Naive thymus-derived CD4-positive, alpha-beta T cell (primary cell): ENCODE measurements at regions of chr3 and their contacts with region 1.

Region 1: GRCh38 chr3:47164007-47164881 is at the start of gene SETD2:
- DNase-seq: peak; percentile 67 to 86 (median 82)
- ATAC-seq: peak; percentile 92
- H3K4me3 ChIP-seq: peak within 1 kb of the TSS; percentile 77
- H3K4me3 Mint-ChIP-seq: peak within 1 kb of the TSS; percentile 90 to 99 (median 98)
- H3K27ac ChIP-seq: peak within 1 kb of the TSS; percentile 96
- H3K27ac Mint-ChIP-seq: peak within 1 kb of the TSS; percentile 94 to 99 (median 99)
- H3K4me1 ChIP-seq: peaks cover 30 to 36% of the 10 kb centered on the region in 2 donors
- H3K4me1 Mint-ChIP-seq: peaks cover 34 to 68% (median 56%) of the 10 kb centered on the region in 7 donors
- H3K27me3 ChIP-seq: no peaks in the 10 kb centered on the region
- H3K27me3 Mint-ChIP-seq: no peaks in the 10 kb centered on the region
- total RNA-seq, gene SETD2: 49.2 to 77.3 (median 71.1) TPM

Region 2: GRCh38 chr3:47117807-47118364 is 46.4 kb before region 1 on chr3:
- CTCF ChIA-PET with region 1: no interaction called
- POLR2A ChIA-PET with region 1: interaction called, 4 read pairs
- intact Hi-C with region 1: loop called in 1 of 2 experiments (anchors 1 kb)
- DNase-seq: peak in 3 of 9 donors; percentile 15 to 25 (median 25)
- ATAC-seq: peak; percentile 67
- H3K4me3 ChIP-seq: no peak overlapping the region
- H3K4me3 Mint-ChIP-seq: peak overlapping the region in 9 of 10 donors; percentile 2 to 60 (median 19)
- H3K27ac ChIP-seq: no peak overlapping the region
- H3K27ac Mint-ChIP-seq: peak overlapping the region; percentile 6 to 70 (median 28)
- H3K4me1 ChIP-seq: peaks cover 4 to 13% of the 10 kb centered on the region in 2 donors
- H3K4me1 Mint-ChIP-seq: peaks cover 30 to 61% (median 53%) of the 10 kb centered on the region in 7 donors
- H3K27me3 ChIP-seq: no peaks in the 10 kb centered on the region
- H3K27me3 Mint-ChIP-seq: no peaks in the 10 kb centered on the region

Region 3: DNA sequence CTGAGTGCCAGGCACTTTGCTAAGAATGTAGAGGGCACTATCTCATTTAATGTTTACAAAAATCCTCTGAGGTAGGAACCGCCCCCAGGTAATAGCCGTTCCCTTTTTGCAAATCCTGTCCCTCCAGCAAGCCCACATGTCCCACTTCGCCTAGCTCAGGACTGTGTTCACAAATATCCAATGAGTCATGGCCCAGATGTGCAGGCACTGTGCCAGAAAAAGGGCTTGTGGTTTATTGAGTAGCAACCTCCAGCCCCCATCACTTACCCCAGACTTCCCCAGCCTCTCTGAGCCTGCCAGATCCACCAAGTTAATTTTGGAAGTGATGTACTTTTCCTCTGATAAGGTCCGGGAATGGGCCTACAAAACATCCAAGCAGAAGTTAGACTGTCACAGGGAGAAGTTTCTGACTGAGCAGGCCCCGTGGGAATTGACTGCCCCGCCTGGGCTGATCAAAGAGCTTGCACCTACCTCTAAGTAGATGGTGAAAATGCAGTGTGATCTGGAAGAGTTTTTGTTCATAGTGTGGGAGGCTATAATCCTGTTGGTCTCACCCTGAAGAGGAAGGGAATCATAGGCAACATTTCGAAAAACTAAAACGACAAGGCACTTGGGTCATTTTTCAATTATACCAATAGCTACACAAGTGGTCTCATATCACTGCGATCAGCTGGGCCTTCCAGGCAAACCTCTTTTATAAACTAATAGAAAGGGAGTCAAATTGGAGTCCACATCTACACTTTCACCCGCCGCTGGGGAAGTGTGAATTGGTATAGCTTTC is 102.7 kb after region 1 on chr3:
- CTCF ChIA-PET with region 1: no interaction called
- POLR2A ChIA-PET with region 1: no interaction called
- intact Hi-C with region 1: no loop called
- DNase-seq: no peak
- ATAC-seq: peak; percentile 32
- H3K4me3 ChIP-seq: no peak overlapping the region
- H3K4me3 Mint-ChIP-seq: no peak overlapping the region
- H3K27ac ChIP-seq: no peak overlapping the region
- H3K27ac Mint-ChIP-seq: peak overlapping the region in 2 of 9 donors; percentile 19 to 37
- H3K4me1 ChIP-seq: no peaks in the 10 kb centered on the region
- H3K4me1 Mint-ChIP-seq: peaks cover 0 to 7% (median 3%) of the 10 kb centered on the region in 7 donors
- H3K27me3 ChIP-seq: no peaks in the 10 kb centered on the region
- H3K27me3 Mint-ChIP-seq: no peaks in the 10 kb centered on the region

Region 4: DNA sequence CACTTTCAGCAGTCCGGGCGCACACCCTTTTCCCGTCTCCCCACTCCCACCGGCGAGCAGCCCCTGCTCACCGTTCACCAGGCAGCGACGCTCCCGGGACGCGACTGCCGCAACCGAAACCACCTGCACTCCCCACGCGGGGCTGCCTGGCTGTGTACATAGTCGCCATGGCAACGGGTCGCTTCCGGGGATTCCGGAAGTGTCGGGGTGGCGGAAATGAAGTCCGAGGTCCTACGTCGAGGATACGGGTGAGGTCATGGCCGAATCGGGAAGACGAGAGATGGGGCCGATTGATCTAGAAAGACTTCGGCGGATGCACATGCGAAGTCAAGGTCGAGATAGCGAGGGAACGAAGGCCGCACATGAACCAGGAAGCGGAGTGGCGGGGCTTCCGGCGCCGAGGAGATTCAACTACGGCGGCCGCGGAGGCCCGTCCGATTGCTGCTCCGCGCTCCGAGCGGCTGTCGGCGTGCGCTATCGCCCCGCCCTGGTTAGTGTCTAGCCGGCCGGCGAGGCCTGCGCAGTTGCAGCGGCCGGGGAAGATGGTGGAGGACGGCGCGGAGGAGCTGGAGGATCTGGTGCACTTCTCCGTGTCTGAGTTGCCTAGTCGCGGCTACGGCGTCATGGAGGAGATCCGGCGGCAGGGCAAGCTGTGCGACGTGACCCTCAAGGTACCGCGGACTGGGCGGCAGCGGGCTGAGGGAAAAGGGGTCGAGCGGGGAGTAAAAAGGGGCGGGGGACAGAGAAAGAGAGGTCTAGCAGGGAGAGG is 118.4 kb after region 1 on chr3 and contains the starts of genes KIF9 and KLHL18:
- CTCF ChIA-PET with region 1: no interaction called
- POLR2A ChIA-PET with region 1: interaction called, 10 read pairs
- intact Hi-C with region 1: loop called (anchors 1 kb)
- DNase-seq: peak; percentile 86 to 98 (median 97)
- ATAC-seq: peak; percentile 91
- H3K4me3 ChIP-seq: peak within 1 kb of the TSS; percentile 76
- H3K4me3 Mint-ChIP-seq: peak within 1 kb of the TSS; percentile 89 to 100 (median 98)
- H3K27ac ChIP-seq: peak within 1 kb of the TSS; percentile 93
- H3K27ac Mint-ChIP-seq: peak within 1 kb of the TSS; percentile 98 to 100 (median 99)
- H3K4me1 ChIP-seq: peaks cover 14 to 23% of the 10 kb centered on the region in 2 donors
- H3K4me1 Mint-ChIP-seq: peaks cover 29 to 56% (median 43%) of the 10 kb centered on the region in 7 donors
- H3K27me3 ChIP-seq: no peaks in the 10 kb centered on the region
- H3K27me3 Mint-ChIP-seq: no peaks in the 10 kb centered on the region
- total RNA-seq, gene KIF9: 2.7 to 15.0 (median 4.1) TPM
- total RNA-seq, gene KLHL18: 21.7 to 47.5 (median 24.5) TPM

Region 5: DNA sequence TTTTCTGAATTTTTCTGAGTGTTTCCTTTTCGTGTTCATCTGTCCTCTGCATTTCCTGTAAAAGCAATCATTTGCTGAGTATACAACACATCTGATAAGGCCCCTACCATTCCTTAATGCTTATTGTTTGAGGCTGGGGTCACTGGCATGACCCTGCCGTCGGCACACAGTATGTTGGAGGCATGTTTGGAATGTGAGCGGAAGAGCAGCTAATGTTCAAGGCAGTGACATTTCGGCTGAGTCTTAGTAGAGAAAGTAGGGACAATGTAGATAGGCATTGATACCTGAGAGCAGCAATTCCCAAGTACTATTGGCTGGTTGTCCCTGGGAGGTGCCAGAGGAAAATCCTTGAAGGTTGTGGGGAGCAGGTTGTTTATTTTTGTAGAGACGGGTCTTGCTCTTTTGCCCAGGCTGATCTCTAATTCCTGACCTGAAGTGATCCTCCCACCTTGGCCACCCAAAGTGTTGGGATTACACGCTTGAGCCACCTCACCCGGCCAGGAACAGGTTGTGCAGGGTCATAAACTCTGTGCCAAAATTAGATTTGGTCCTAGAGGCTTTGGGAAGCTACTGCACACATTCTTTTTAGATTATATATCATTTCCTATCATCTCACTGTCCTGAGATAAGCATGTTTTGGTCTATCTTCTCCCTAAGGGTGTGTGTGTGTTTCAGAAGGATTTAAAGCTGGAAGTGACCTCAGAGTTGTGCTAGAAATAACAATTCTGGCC is 230.1 kb after region 1 on chr3:
- CTCF ChIA-PET with region 1: no interaction called
- POLR2A ChIA-PET with region 1: no interaction called
- intact Hi-C with region 1: no loop called
- DNase-seq: no peak
- ATAC-seq: no peak
- H3K4me3 ChIP-seq: no peak overlapping the region
- H3K4me3 Mint-ChIP-seq: peak overlapping the region in 1 of 10 donors; percentile 10
- H3K27ac ChIP-seq: no peak overlapping the region
- H3K27ac Mint-ChIP-seq: peak overlapping the region in 7 of 9 donors; percentile 17 to 82 (median 61)
- H3K4me1 ChIP-seq: no peaks in the 10 kb centered on the region
- H3K4me1 Mint-ChIP-seq: peaks cover 19 to 56% (median 26%) of the 10 kb centered on the region in 7 donors
- H3K27me3 ChIP-seq: no peaks in the 10 kb centered on the region
- H3K27me3 Mint-ChIP-seq: no peaks in the 10 kb centered on the region

Region 6: GRCh38 chr3:47420511-47421484 is 256.6 kb after region 1 on chr3:
- CTCF ChIA-PET with region 1: no interaction called
- POLR2A ChIA-PET with region 1: no interaction called
- intact Hi-C with region 1: loop called in 1 of 2 experiments (anchors 1 kb)
- DNase-seq: peak; percentile 66 to 90 (median 88)
- ATAC-seq: peak; percentile 98
- H3K4me3 ChIP-seq: peak overlapping the region; percentile 29
- H3K4me3 Mint-ChIP-seq: peak overlapping the region; percentile 56 to 86 (median 78)
- H3K27ac ChIP-seq: peak overlapping the region; percentile 79
- H3K27ac Mint-ChIP-seq: peak overlapping the region; percentile 90 to 100 (median 99)
- H3K4me1 ChIP-seq: peaks cover 8 to 15% of the 10 kb centered on the region in 2 donors
- H3K4me1 Mint-ChIP-seq: peaks cover 0 to 22% (median 10%) of the 10 kb centered on the region in 7 donors
- H3K27me3 ChIP-seq: no peaks in the 10 kb centered on the region
- H3K27me3 Mint-ChIP-seq: no peaks in the 10 kb centered on the region